ENCODE measurements at regions of chrX and their contacts with region 1.

Region 1: DNA sequence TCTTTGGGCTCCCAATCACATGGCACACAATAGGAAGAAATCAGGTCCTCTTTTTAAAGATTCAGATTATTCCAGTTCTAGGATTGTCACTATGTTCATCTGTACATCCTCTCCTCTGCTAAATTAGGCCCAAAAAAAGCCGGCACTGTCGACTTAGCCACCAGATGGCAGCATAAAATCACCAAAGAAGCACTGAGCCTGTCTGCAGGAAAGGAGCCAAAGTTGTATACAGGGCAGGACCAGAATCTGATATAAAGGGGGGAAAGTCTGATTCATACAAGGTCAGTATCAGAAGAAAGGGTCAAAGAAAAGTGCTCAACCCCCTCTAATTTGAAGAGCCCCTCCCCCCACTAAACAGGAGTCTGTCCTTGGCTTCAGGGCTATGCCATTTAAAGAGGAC is 292.5 kb downstream of the CHIC1 start:
- DNase-seq: peak; percentile 23 to 34
- ATAC-seq: peak; percentile 65 to 73
- H3K4me3 ChIP-seq: no peak overlapping the region
- H3K27ac ChIP-seq: no peak overlapping the region
- H3K4me1 ChIP-seq: peaks cover 0 to 3% of the 10 kb centered on the region in 2 donors
- H3K27me3 ChIP-seq: no peaks in the 10 kb centered on the region
- CTCF ChIP-seq: peak; percentile 36 to 82 (median 76)
- POLR2A ChIP-seq: no peak

Region 2: DNA sequence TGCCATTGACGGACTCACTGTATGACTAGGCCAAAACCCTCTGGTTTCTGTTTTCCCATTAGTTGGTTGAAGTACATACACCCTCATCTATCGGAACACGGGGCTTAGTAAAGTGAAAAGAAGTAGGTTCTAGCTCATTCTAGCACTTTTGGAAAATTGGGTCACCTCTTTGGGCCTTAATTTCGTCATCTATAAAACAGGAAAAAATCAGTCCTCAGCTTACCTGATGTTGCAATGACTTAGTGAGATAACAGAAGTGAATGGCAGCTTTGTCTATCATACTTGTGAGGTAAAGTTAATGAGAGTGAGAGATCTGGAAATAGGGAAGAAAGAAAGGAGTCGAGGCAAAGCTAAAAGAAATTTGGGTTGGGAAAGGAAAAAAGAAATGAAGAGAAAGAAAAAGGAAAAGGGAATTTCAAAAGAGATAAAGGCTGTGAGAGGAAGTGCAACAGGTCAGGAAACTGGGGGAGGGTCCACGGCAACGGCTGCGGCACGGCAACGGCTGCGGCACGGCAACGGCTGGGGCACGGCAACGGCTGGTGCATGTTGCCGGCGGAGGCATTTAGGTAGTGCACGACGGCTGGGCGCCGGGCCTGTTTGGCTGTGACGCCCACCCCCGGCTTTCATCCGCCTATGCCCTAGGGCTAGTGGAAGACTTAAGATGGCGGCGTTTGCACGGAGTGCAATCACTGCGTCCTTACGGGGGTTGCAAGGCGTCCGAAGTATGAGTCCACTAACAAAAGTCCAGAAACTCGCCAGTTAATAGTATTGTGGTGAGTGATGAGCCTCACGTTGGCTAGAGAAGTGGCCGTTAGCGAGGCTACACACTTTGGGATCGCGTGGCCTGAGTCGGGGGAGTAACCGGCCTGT is 88.4 kb after region 1 on chrX:
- in situ Hi-C with region 1: no loop called
- intact Hi-C with region 1: loop called (anchors 2 kb)
- DNase-seq: peak; percentile 64 to 80
- ATAC-seq: peak; percentile 96 to 98
- H3K4me3 ChIP-seq: peak overlapping the region; percentile 67 to 85 (median 70)
- H3K27ac ChIP-seq: peak overlapping the region; percentile 78 to 91 (median 84)
- H3K4me1 ChIP-seq: peaks cover 0 to 27% of the 10 kb centered on the region in 2 donors
- H3K27me3 ChIP-seq: no peaks in the 10 kb centered on the region
- CTCF ChIP-seq: no peak
- POLR2A ChIP-seq: peak; percentile 49 to 67

Region 3: GRCh38 chrX:74015379-74016019 is 160.0 kb after region 1 on chrX:
- in situ Hi-C with region 1: loop called (anchors 5 to 10 kb)
- intact Hi-C with region 1: loop called (anchors 1 kb)
- DNase-seq: peak in 1 of 2 donors; percentile 30
- ATAC-seq: peak; percentile 52 to 76
- H3K4me3 ChIP-seq: no peak overlapping the region
- H3K27ac ChIP-seq: no peak overlapping the region
- H3K4me1 ChIP-seq: no peaks in the 10 kb centered on the region
- H3K27me3 ChIP-seq: no peaks in the 10 kb centered on the region
- CTCF ChIP-seq: peak; percentile 51 to 88 (median 73)
- POLR2A ChIP-seq: no peak

Region 4: GRCh38 chrX:74133156-74133796 is 277.7 kb after region 1 on chrX:
- in situ Hi-C with region 1: loop called (anchors 5 to 25 kb)
- intact Hi-C with region 1: loop called (anchors 2 kb)
- DNase-seq: no peak
- ATAC-seq: peak; percentile 72 to 77
- H3K4me3 ChIP-seq: no peak overlapping the region
- H3K27ac ChIP-seq: no peak overlapping the region
- H3K4me1 ChIP-seq: no peaks in the 10 kb centered on the region
- H3K27me3 ChIP-seq: no peaks in the 10 kb centered on the region
- CTCF ChIP-seq: peak; percentile 56 to 83 (median 70)
- POLR2A ChIP-seq: no peak

Region 5: DNA sequence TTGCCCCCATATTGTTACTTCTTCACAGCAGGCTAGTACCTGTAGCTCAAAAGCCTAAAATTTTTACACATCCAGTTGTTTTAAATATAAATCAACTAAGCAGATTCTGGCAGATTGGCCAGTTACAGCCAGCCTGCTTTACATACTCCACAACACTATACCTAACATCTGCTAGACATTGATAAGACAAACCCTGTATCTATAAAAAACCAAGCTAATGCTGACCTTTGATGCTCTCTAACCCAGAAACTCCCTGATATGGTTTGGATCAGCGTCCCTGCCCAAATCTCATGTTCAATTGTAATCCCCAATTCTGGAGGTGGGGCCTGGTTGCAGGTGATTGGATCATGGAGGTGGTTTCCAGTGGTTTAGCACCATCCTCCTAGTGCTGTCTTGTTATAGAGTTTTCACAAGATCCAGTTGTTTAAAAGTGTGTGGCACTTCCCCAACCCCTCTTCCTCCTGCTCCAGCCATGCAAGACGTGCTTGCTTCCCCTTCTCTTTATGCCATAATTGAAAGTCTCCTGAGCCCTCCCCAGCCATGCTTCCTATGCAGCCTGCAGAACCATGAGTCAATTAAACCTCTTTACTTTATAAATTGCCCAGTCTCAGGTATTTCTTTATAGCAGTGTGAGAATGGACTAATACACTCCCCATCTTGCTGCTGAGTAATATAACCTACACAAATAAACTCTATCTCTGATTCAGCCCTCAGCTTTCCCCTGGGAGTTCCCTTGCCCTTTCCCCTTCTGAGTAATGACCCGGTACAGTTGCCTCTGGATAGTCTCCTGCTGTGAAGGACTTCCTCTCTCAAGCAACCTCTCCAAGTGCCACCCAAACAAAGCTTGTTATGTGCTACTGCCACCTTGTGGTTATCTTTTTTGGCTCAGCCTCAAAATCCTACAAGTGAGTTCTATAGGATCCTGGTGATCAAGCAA is 488.1 kb after region 1 on chrX:
- in situ Hi-C with region 1: loop called (anchors 5 to 10 kb)
- intact Hi-C with region 1: no loop called
- DNase-seq: peak; percentile 11 to 18
- ATAC-seq: peak in 1 of 2 donors; percentile 61
- H3K4me3 ChIP-seq: no peak overlapping the region
- H3K27ac ChIP-seq: no peak overlapping the region
- H3K4me1 ChIP-seq: no peaks in the 10 kb centered on the region
- H3K27me3 ChIP-seq: no peaks in the 10 kb centered on the region
- CTCF ChIP-seq: peak in 4 of 5 experiments; percentile 46 to 65 (median 56)
- POLR2A ChIP-seq: no peak